ENCODE measurements at regions of chr1 and their contacts with region 1.

Region 1: GRCh38 chr1:156591432-156592157 is at the start of gene NAXE:
- DNase-seq: peak; percentile 21 to 84 (median 66)
- ATAC-seq: peak; percentile 95
- H3K4me3 ChIP-seq: peak within 1 kb of the TSS; percentile 51 to 83
- H3K4me3 Mint-ChIP-seq: peak within 1 kb of the TSS; percentile 87
- H3K27ac ChIP-seq: peak within 1 kb of the TSS; percentile 49 to 86
- H3K27ac Mint-ChIP-seq: peak within 1 kb of the TSS; percentile 91
- H3K4me1 ChIP-seq: peaks cover 18% of the 10 kb centered on the region
- H3K4me1 Mint-ChIP-seq: peaks cover 22% of the 10 kb centered on the region
- H3K27me3 ChIP-seq: no peaks in the 10 kb centered on the region
- H3K27me3 Mint-ChIP-seq: no peaks in the 10 kb centered on the region
- CTCF ChIP-seq: no peak
- total RNA-seq, gene NAXE: 18.4 TPM

Region 2: DNA sequence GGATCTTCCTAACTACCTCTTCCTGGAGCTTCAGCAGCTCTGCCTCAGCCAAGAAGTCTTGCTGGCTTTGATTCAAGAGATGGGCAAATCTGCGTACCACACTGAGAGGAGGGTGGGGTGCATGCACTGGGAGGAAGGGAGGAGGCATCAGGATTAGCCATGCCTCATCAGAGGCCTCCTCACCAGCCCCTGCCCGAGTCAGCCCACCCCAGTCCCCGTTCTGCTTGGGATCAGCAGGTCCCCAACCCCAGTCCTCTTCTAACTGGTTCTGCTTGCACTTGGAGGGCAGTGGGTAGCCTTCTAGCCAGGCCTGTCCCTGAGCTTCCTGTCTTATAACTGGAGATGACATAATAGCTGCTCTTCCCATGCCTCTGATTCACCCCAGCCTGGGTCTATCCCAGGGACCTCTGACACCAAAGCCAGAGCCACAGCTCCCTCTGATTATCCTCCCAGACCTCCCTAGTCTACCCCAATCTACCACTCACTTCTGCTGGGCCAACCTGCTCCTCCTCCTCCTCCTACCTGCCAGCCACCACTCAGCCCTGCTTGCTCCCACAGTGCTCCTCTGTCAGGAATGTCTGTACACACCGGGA is 50.7 kb before region 1 on chr1:
- CTCF ChIA-PET with region 1: no interaction called
- POLR2A ChIA-PET with region 1: no interaction called
- intact Hi-C with region 1: no loop called
- DNase-seq: no peak
- ATAC-seq: no peak
- H3K4me3 ChIP-seq: no peak overlapping the region
- H3K4me3 Mint-ChIP-seq: no peak overlapping the region
- H3K27ac ChIP-seq: no peak overlapping the region
- H3K27ac Mint-ChIP-seq: no peak overlapping the region
- H3K4me1 ChIP-seq: no peaks in the 10 kb centered on the region
- H3K4me1 Mint-ChIP-seq: no peaks in the 10 kb centered on the region
- H3K27me3 ChIP-seq: no peaks in the 10 kb centered on the region
- H3K27me3 Mint-ChIP-seq: no peaks in the 10 kb centered on the region
- CTCF ChIP-seq: no peak

Region 3: DNA sequence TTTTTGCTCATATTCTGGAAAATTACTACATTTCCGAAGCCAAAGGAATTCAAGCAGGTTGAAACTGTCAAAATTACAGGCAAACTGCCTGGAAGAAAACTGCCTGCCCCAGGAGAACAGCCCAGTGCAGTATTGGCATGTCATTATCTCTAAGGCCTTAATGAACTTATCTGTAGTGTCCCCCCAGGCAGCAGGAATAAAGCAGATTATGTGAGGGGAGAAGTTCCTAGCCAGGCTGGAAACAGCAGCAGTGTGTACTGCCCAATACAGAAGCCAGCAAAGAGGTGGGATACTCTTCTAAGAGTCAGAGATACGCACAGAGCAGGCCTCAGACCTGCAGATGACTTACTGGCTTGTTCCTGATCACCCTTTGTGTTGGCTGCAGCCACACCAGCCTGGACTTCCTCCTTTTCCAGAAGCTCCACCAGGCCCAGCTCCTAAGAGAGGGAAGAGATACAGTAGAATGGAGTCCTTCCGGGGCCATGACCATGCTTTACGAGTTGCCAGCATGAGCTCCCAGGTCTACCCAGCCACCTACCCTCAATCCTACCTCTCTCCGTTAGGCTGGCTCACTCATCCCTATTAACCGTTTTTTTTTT is 30.9 kb before region 1 on chr1:
- CTCF ChIA-PET with region 1: no interaction called
- POLR2A ChIA-PET with region 1: no interaction called
- intact Hi-C with region 1: no loop called
- DNase-seq: no peak
- ATAC-seq: no peak
- H3K4me3 ChIP-seq: no peak overlapping the region
- H3K4me3 Mint-ChIP-seq: no peak overlapping the region
- H3K27ac ChIP-seq: no peak overlapping the region
- H3K27ac Mint-ChIP-seq: no peak overlapping the region
- H3K4me1 ChIP-seq: no peaks in the 10 kb centered on the region
- H3K4me1 Mint-ChIP-seq: no peaks in the 10 kb centered on the region
- H3K27me3 ChIP-seq: no peaks in the 10 kb centered on the region
- H3K27me3 Mint-ChIP-seq: no peaks in the 10 kb centered on the region
- CTCF ChIP-seq: no peak

Region 4: GRCh38 chr1:156608036-156608674 is 16.6 kb after region 1 on chr1:
- CTCF ChIA-PET with region 1: interaction called, 58 read pairs
- POLR2A ChIA-PET with region 1: interaction called, 17 read pairs
- intact Hi-C with region 1: no loop called
- DNase-seq: peak; percentile 37 to 89 (median 65)
- ATAC-seq: peak; percentile 95
- H3K4me3 ChIP-seq: no peak overlapping the region
- H3K4me3 Mint-ChIP-seq: no peak overlapping the region
- H3K27ac ChIP-seq: no peak overlapping the region
- H3K27ac Mint-ChIP-seq: no peak overlapping the region
- H3K4me1 ChIP-seq: peaks cover 8% of the 10 kb centered on the region
- H3K4me1 Mint-ChIP-seq: peaks cover 11% of the 10 kb centered on the region
- H3K27me3 ChIP-seq: peaks cover 0 to 2% of the 10 kb centered on the region in 2 experiments
- H3K27me3 Mint-ChIP-seq: peaks cover 9% of the 10 kb centered on the region
- CTCF ChIP-seq: peak; percentile 88

Region 5: GRCh38 chr1:156667610-156667967 is 76.0 kb after region 1 on chr1:
- CTCF ChIA-PET with region 1: no interaction called
- POLR2A ChIA-PET with region 1: no interaction called
- intact Hi-C with region 1: no loop called
- DNase-seq: no peak
- ATAC-seq: no peak
- H3K4me3 ChIP-seq: no peak overlapping the region
- H3K4me3 Mint-ChIP-seq: no peak overlapping the region
- H3K27ac ChIP-seq: no peak overlapping the region
- H3K27ac Mint-ChIP-seq: no peak overlapping the region
- H3K4me1 ChIP-seq: no peaks in the 10 kb centered on the region
- H3K4me1 Mint-ChIP-seq: no peaks in the 10 kb centered on the region
- H3K27me3 ChIP-seq: no peaks in the 10 kb centered on the region
- H3K27me3 Mint-ChIP-seq: peaks cover 11% of the 10 kb centered on the region
- CTCF ChIP-seq: no peak

Region 6: GRCh38 chr1:156816561-156817328 is 225.2 kb after region 1 on chr1 and contains the start of gene SH2D2A:
- CTCF ChIA-PET with region 1: no interaction called
- POLR2A ChIA-PET with region 1: no interaction called
- intact Hi-C with region 1: no loop called
- DNase-seq: peak; percentile 91 to 100 (median 94)
- ATAC-seq: peak; percentile 79
- H3K4me3 ChIP-seq: peak within 1 kb of the TSS; percentile 75
- H3K4me3 Mint-ChIP-seq: peak within 1 kb of the TSS; percentile 84
- H3K27ac ChIP-seq: peak within 1 kb of the TSS; percentile 91 to 99
- H3K27ac Mint-ChIP-seq: peak within 1 kb of the TSS; percentile 99
- H3K4me1 ChIP-seq: peaks cover 53% of the 10 kb centered on the region
- H3K4me1 Mint-ChIP-seq: peaks cover 60% of the 10 kb centered on the region
- H3K27me3 ChIP-seq: no peaks in the 10 kb centered on the region
- H3K27me3 Mint-ChIP-seq: no peaks in the 10 kb centered on the region
- CTCF ChIP-seq: no peak
- total RNA-seq, gene SH2D2A: 85.6 to 86.3 TPM